A673 (cell line): ENCODE measurements at regions of chrX and their contacts with region 1.

Region 1: DNA sequence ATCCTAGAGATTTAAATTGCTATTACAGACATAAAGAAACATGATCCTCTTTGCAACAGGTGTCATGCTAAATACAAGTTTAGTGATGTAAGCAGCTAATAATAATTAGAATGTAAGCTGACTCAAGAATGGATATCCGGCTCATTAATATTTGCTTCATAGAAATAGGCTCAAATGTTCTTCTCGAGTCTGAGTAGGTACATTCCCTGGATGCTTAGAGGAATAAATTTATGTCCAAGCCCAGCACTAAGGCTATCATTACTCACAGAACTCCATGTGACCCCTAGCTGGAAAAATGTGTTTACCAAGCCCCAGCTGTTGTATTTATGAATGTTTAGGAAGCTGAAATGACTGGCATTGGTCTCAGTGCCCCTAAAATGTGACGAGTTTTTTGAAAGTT is 87.6 kb upstream of the TSPAN7 start:
- DNase-seq: no peak
- H3K4me3 ChIP-seq: no peak overlapping the region
- H3K27ac ChIP-seq: no peak overlapping the region
- H3K4me1 ChIP-seq: no peaks in the 10 kb centered on the region
- H3K27me3 ChIP-seq: no peaks in the 10 kb centered on the region
- CTCF ChIP-seq: no peak

Region 2: GRCh38 chrX:38538134-38538533 is 64.4 kb after region 1 on chrX:
- CTCF ChIA-PET with region 1: no interaction called
- POLR2A ChIA-PET with region 1: no interaction called
- intact Hi-C with region 1: loop called (anchors 10 kb)
- DNase-seq: no peak
- H3K4me3 ChIP-seq: no peak overlapping the region
- H3K27ac ChIP-seq: no peak overlapping the region
- H3K4me1 ChIP-seq: no peaks in the 10 kb centered on the region
- H3K27me3 ChIP-seq: no peaks in the 10 kb centered on the region
- CTCF ChIP-seq: no peak